ENCODE measurements at regions of chr6 and their contacts with region 1.

Region 1: DNA sequence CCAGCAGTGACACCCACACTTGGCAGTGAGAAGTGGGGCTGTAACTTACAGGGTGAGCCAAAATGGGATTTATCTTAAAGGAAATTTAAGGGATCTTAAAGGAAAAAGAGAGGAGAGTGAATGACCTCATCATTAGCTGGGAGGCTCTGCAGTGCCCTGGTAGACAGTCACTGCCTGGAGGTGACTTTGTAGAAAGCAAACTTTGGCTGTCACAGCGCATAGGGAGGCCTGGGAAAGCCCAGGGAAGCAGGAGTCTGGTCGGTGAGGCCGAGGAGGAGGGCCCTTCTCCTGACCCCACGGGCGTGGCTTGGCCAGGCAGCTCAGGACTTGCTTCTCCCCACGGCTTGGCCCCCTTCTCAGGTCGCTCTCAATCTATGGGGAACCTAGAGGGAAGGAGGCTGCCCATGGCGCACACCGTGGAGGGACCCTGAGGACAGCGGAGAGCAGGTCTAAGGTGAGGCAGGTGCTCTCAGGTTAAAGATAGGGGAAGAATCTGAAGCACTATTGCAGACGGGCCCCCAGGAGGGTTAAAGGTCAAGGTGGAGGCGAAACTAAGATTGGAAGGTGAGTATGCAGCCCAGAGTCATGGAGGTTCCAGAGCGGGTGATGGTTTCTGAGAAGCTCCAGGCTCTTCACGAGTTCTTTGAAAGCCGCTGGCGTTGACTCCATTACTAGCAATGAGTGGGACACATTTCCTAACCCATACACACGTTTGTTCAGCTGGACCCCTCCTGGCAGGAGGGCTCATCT is 15.6 kb upstream of the RIPK1 start:
- DNase-seq: no peak
- H3K4me3 ChIP-seq: peak overlapping the region in 1 of 2 donors; percentile 61
- H3K4me3 Mint-ChIP-seq: peak overlapping the region; percentile 53 to 86 (median 78)
- H3K27ac ChIP-seq: peak overlapping the region; percentile 44
- H3K27ac Mint-ChIP-seq: peak overlapping the region in 6 of 7 donors; percentile 65 to 85 (median 80)
- H3K4me1 ChIP-seq: peaks cover 13% of the 10 kb centered on the region
- H3K4me1 Mint-ChIP-seq: peaks cover 6 to 32% (median 16%) of the 10 kb centered on the region in 4 donors
- H3K27me3 ChIP-seq: no peaks in the 10 kb centered on the region
- H3K27me3 Mint-ChIP-seq: no peaks in the 10 kb centered on the region

Region 2: DNA sequence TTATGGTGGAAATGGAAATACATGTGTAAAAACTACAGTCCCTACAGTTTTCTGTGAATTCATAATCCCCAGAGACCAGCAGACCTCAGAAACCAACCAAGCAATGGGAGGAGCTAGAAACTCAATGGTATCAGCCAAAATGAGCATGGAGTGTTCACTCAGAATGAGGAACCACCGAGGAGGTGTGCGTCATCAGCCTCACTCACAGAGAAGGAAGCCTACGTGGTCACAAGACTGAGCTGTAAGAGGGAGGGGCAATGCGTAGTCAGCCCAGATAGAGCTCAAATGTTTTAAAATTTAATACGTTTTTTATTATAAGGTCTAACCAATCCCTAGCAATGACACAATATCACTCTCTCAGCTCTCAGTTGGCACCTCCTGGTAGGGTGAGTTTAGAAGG is 319.3 kb before region 1 on chr6:
- CTCF ChIA-PET with region 1: no interaction called
- POLR2A ChIA-PET with region 1: no interaction called
- intact Hi-C with region 1: no loop called
- DNase-seq: peak in 4 of 5 donors; percentile 2 to 60 (median 8)
- H3K4me3 ChIP-seq: no peak overlapping the region
- H3K4me3 Mint-ChIP-seq: no peak overlapping the region
- H3K27ac ChIP-seq: no peak overlapping the region
- H3K27ac Mint-ChIP-seq: no peak overlapping the region
- H3K4me1 ChIP-seq: no peaks in the 10 kb centered on the region
- H3K4me1 Mint-ChIP-seq: no peaks in the 10 kb centered on the region
- H3K27me3 ChIP-seq: no peaks in the 10 kb centered on the region
- H3K27me3 Mint-ChIP-seq: peaks cover 5 to 8% of the 10 kb centered on the region in 2 donors

Region 3: GRCh38 chr6:3017304-3017703 is 35.4 kb before region 1 on chr6:
- CTCF ChIA-PET with region 1: interaction called, 3 read pairs
- POLR2A ChIA-PET with region 1: interaction called, 83 read pairs
- intact Hi-C with region 1: no loop called
- DNase-seq: no peak
- H3K4me3 ChIP-seq: no peak overlapping the region
- H3K4me3 Mint-ChIP-seq: no peak overlapping the region
- H3K27ac ChIP-seq: no peak overlapping the region
- H3K27ac Mint-ChIP-seq: no peak overlapping the region
- H3K4me1 ChIP-seq: peaks cover 11% of the 10 kb centered on the region
- H3K4me1 Mint-ChIP-seq: peaks cover 6 to 27% (median 12%) of the 10 kb centered on the region in 4 donors
- H3K27me3 ChIP-seq: no peaks in the 10 kb centered on the region
- H3K27me3 Mint-ChIP-seq: no peaks in the 10 kb centered on the region

Region 4: DNA sequence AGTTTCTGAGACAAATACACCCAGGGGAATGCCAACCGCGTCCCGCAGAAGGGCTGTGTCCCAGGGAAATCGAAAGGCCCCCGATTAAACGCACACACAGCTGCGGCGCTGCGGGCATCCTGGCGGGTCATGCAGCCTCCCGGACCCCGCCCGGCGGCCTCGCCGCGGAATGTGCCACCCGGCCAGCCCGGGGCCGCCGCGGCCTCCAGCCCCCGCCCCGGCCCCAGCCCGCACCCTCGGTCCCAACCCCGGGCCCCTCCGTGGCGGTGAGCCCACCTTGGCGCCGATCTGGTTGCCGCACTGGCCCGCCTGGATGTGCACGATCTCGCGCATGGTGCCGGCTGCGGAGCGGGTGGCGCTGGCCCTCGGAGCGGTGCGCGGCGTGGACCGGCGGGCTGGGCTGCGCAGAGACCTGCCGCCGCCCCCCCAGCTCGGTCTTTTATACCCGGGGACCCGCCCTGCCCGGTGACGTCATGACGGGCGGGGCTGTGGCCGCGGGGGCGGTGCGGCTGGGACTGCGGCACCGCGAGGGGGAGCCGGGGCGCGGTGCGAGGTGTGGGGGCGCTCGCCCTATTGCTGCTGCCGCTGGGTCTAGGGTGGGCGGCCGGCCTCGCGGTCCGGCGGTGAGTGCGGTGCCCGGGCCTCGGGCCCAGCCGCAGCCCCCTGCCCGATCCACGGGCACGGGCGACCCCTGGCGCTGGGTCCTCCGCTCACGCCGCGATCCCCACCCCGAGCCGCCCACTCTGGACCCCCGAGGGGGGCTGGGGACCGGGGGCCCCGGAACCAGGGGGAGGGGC is 104.7 kb after region 1 on chr6 and contains the start of gene TUBB2A:
- CTCF ChIA-PET with region 1: no interaction called
- POLR2A ChIA-PET with region 1: no interaction called
- intact Hi-C with region 1: no loop called
- DNase-seq: peak; percentile 83 to 95 (median 91)
- H3K4me3 ChIP-seq: peak within 1 kb of the TSS; percentile 49 to 81
- H3K4me3 Mint-ChIP-seq: peak within 1 kb of the TSS; percentile 88 to 95 (median 92)
- H3K27ac ChIP-seq: peak within 1 kb of the TSS; percentile 81
- H3K27ac Mint-ChIP-seq: peak within 1 kb of the TSS; percentile 86 to 97 (median 94)
- H3K4me1 ChIP-seq: peaks cover 30% of the 10 kb centered on the region
- H3K4me1 Mint-ChIP-seq: peaks cover 21 to 44% (median 32%) of the 10 kb centered on the region in 4 donors
- H3K27me3 ChIP-seq: no peaks in the 10 kb centered on the region
- H3K27me3 Mint-ChIP-seq: no peaks in the 10 kb centered on the region
- total RNA-seq, gene TUBB2A: 5.2 to 5.4 TPM